OCI-LY7 (cell line): ENCODE measurements at regions of chr5 and their contacts with region 1.

Region 1: GRCh38 chr5:114988096-114988495 is 181.6 kb downstream of the TRIM36 start:
- DNase-seq: no peak
- H3K4me3 ChIP-seq: no peak overlapping the region
- H3K27ac ChIP-seq: no peak overlapping the region
- H3K4me1 ChIP-seq: no peaks in the 10 kb centered on the region
- CTCF ChIP-seq: no peak

Region 2: GRCh38 chr5:114999176-114999575 is 11.1 kb after region 1 on chr5:
- CTCF ChIA-PET with region 1: no interaction called
- POLR2A ChIA-PET with region 1: no interaction called
- intact Hi-C with region 1: loop called (anchors 1 kb)
- DNase-seq: no peak
- H3K4me3 ChIP-seq: no peak overlapping the region
- H3K27ac ChIP-seq: no peak overlapping the region
- H3K4me1 ChIP-seq: no peaks in the 10 kb centered on the region
- CTCF ChIP-seq: no peak